ENCODE measurements at regions of chr19 and their contacts with region 1.

Region 1: GRCh38 chr19:11496391-11497163 is 9.1 kb downstream of the ZNF653 start:
- DNase-seq: peak; percentile 84 to 93 (median 88)
- ATAC-seq: peak; percentile 99
- H3K4me3 ChIP-seq: no peak overlapping the region
- H3K27ac ChIP-seq: peak overlapping the region; percentile 39; the same call in 2 of the 3 replicates
- H3K4me1 ChIP-seq: peaks cover 15 to 42% of the 10 kb centered on the region in 2 experiments
- H3K27me3 ChIP-seq: no peaks in the 10 kb centered on the region
- CTCF ChIP-seq: peak; percentile 91 to 94 (median 92)
- EP300 ChIP-seq: no peak; the same call in 1 of the 2 replicates
- POLR2A ChIP-seq: no peak
- RAD21 ChIP-seq: peak; percentile 72 to 88

Region 2: GRCh38 chr19:11535792-11536595 is 39.4 kb after region 1 on chr19:
- CTCF ChIA-PET with region 1: interaction called, 3 read pairs
- POLR2A ChIA-PET with region 1: interaction called, 3 read pairs
- in situ Hi-C with region 1: no loop called
- intact Hi-C with region 1: loop called (anchors 5 kb)
- DNase-seq: peak; percentile 95 to 97 (median 97)
- ATAC-seq: peak; percentile 77
- H3K4me3 ChIP-seq: peak overlapping the region; percentile 40
- H3K27ac ChIP-seq: peak overlapping the region; percentile 84
- H3K4me1 ChIP-seq: peaks cover 35 to 53% of the 10 kb centered on the region in 2 experiments; a peak in 4 of 5 replicates
- H3K27me3 ChIP-seq: no peaks in the 10 kb centered on the region
- CTCF ChIP-seq: peak; percentile 90 to 97 (median 94)
- EP300 ChIP-seq: peak; percentile 41; the same call in 1 of the 2 replicates
- POLR2A ChIP-seq: peak; percentile 72
- RAD21 ChIP-seq: peak; percentile 50 to 54

Region 3: DNA sequence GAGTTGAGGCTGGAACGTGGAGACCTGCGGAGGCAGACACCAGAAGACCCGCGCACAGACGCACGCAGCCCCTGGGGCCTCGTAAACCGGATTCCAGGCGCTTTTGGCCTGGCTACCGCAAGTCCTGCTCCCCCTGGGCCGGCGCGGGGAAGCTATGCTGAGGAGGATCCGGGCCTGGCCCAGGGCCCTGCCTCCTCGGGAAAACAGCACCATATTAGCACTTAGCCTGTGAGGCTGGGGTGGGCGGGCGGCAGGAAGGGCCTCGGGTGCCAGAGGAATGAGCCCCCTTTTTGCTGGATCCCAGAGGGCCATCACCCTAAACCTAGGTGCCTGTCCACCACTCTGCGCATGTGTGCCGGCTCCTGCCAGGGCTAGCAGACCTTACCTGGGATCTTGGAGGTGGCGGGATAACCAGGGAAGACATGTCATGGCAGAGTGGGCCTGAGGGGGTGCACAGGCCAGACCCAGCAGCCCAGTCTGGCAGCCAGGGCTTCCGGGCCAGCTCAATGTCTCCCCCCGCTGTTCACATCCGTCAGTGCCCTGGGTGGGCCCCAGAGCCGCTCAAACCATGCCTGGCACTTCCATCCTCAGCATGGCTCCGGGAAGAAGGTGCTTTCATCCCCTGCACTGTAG is 55.1 kb after region 1 on chr19:
- CTCF ChIA-PET with region 1: no interaction called
- POLR2A ChIA-PET with region 1: no interaction called
- in situ Hi-C with region 1: no loop called
- intact Hi-C with region 1: loop called (anchors 1 kb)
- DNase-seq: peak in 3 of 4 experiments; percentile 49 to 62 (median 54)
- ATAC-seq: peak; percentile 89
- H3K4me3 ChIP-seq: no peak overlapping the region
- H3K27ac ChIP-seq: no peak overlapping the region; the same call in 2 of the 3 replicates
- H3K4me1 ChIP-seq: peaks cover 1 to 36% of the 10 kb centered on the region in 2 experiments; a peak in 4 of 5 replicates
- H3K27me3 ChIP-seq: no peaks in the 10 kb centered on the region
- CTCF ChIP-seq: peak; percentile 61 to 77 (median 64); a peak in 5 of 6 replicates
- EP300 ChIP-seq: no peak
- POLR2A ChIP-seq: no peak
- RAD21 ChIP-seq: peak; percentile 22 to 63; a peak in 3 of 4 replicates

Region 4: GRCh38 chr19:11570039-11570462 is 73.5 kb after region 1 on chr19:
- CTCF ChIA-PET with region 1: no interaction called
- POLR2A ChIA-PET with region 1: no interaction called
- in situ Hi-C with region 1: no loop called
- intact Hi-C with region 1: no loop called
- DNase-seq: peak in 2 of 4 experiments; percentile 10 to 16
- ATAC-seq: no peak; the same call in 2 of the 3 replicates
- H3K4me3 ChIP-seq: no peak overlapping the region
- H3K27ac ChIP-seq: no peak overlapping the region
- H3K4me1 ChIP-seq: peaks cover 23 to 41% of the 10 kb centered on the region in 2 experiments
- H3K27me3 ChIP-seq: no peaks in the 10 kb centered on the region
- CTCF ChIP-seq: no peak
- EP300 ChIP-seq: no peak
- POLR2A ChIP-seq: no peak
- RAD21 ChIP-seq: no peak

Region 5: GRCh38 chr19:11587302-11587974 is 90.9 kb after region 1 on chr19:
- CTCF ChIA-PET with region 1: interaction called, 7 read pairs
- POLR2A ChIA-PET with region 1: interaction called, 3 read pairs
- in situ Hi-C with region 1: loop called (anchors 5 kb)
- intact Hi-C with region 1: loop called (anchors 1 kb)
- DNase-seq: peak; percentile 77 to 87 (median 80)
- ATAC-seq: peak; percentile 93
- H3K4me3 ChIP-seq: no peak overlapping the region
- H3K27ac ChIP-seq: no peak overlapping the region
- H3K4me1 ChIP-seq: peaks cover 12 to 20% of the 10 kb centered on the region in 2 experiments; a peak in 4 of 5 replicates
- H3K27me3 ChIP-seq: no peaks in the 10 kb centered on the region
- CTCF ChIP-seq: peak; percentile 87 to 96 (median 96)
- EP300 ChIP-seq: no peak
- POLR2A ChIP-seq: no peak
- RAD21 ChIP-seq: peak; percentile 92 to 98

Measured in K562 (cell line).